Caco-2 (cell line): ENCODE measurements at regions of chr9 and their contacts with region 1.

Region 1: GRCh38 chr9:97307091-97307490 is 368 bp upstream of the CCDC180 start:
- DNase-seq: no peak
- H3K4me3 ChIP-seq: no peak overlapping the region
- H3K4me3 Mint-ChIP-seq: no peak overlapping the region
- H3K27ac Mint-ChIP-seq: no peak overlapping the region
- H3K4me1 ChIP-seq: peaks cover 7% of the 10 kb centered on the region; the same call in 1 of the 2 replicates
- H3K4me1 Mint-ChIP-seq: no peaks in the 10 kb centered on the region
- H3K27me3 ChIP-seq: no peaks in the 10 kb centered on the region
- H3K27me3 Mint-ChIP-seq: no peaks in the 10 kb centered on the region
- CTCF ChIP-seq: no peak

Region 2: DNA sequence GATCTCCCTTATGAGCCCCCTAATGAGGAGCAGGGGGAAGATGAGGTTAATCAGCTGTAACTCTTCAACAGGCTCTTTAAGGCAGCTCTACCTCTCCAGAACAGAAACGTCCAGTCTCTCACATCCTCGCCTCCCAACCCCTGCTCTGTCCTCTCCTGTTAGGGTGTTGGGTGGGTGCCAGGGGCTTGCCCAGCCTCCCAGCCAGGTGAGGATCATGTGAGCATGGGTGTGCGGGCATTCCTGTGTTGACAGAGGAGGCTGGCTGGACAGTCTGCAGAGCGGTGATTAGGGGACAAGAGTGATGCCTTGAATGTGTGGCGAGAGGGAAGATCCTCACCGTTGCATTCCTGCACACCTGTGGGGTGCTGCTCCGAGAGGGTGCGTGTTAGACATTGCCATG is 52.1 kb after region 1 on chr9:
- CTCF ChIA-PET with region 1: no interaction called
- POLR2A ChIA-PET with region 1: no interaction called
- intact Hi-C with region 1: loop called (anchors 10 kb)
- DNase-seq: no peak
- H3K4me3 ChIP-seq: no peak overlapping the region
- H3K4me3 Mint-ChIP-seq: no peak overlapping the region
- H3K27ac Mint-ChIP-seq: peak overlapping the region; percentile 35
- H3K4me1 ChIP-seq: peaks cover 28% of the 10 kb centered on the region
- H3K4me1 Mint-ChIP-seq: peaks cover 38% of the 10 kb centered on the region
- H3K27me3 ChIP-seq: no peaks in the 10 kb centered on the region
- H3K27me3 Mint-ChIP-seq: no peaks in the 10 kb centered on the region
- CTCF ChIP-seq: no peak